ENCODE measurements at regions of chr2 and their contacts with region 1.

Region 1: GRCh38 chr2:200525882-200526651 is at the start of gene SGO2:
- DNase-seq: peak; percentile 98
- ATAC-seq: peak; percentile 99
- H3K4me3 Mint-ChIP-seq: peak within 1 kb of the TSS; percentile 92
- H3K27ac Mint-ChIP-seq: peak within 1 kb of the TSS; percentile 91
- H3K4me1 Mint-ChIP-seq: peaks cover 31% of the 10 kb centered on the region
- H3K27me3 Mint-ChIP-seq: peaks cover 10% of the 10 kb centered on the region
- total RNA-seq, gene SGO2: 54.4 to 56.5 TPM

Region 2: GRCh38 chr2:200509612-200510433 is 16.2 kb before region 1 on chr2 and contains the start of gene KCTD18:
- CTCF ChIA-PET with region 1: interaction called, 13 read pairs
- POLR2A ChIA-PET with region 1: interaction called, 11 read pairs
- DNase-seq: peak; percentile 93
- ATAC-seq: peak; percentile 99
- H3K4me3 Mint-ChIP-seq: peak within 1 kb of the TSS; percentile 96
- H3K27ac Mint-ChIP-seq: peak within 1 kb of the TSS; percentile 93
- H3K4me1 Mint-ChIP-seq: peaks cover 20% of the 10 kb centered on the region
- H3K27me3 Mint-ChIP-seq: no peaks in the 10 kb centered on the region
- total RNA-seq, gene KCTD18: 14.3 to 14.8 TPM

Measured in activated CD8-positive, alpha-beta T cell treated with anti-CD3 and anti-CD28 coated beads, Interleukin-2, amount 10 ng/mL, durations not matched to agents 7 days and 5 days (primary cell).